ENCODE measurements at regions of chr12 and their contacts with region 1.

Region 1: GRCh38 chr12:123232807-123233543 is at the starts of genes MPHOSPH9 and MTRFR:
- DNase-seq: peak; percentile 99
- ATAC-seq: peak; percentile 93 to 98 (median 96)
- H3K4me3 ChIP-seq: peak within 1 kb of the TSS; percentile 87 to 92 (median 89)
- H3K27ac ChIP-seq: peak within 1 kb of the TSS; percentile 80 to 88 (median 87)
- H3K4me1 ChIP-seq: peaks cover 0 to 36% (median 8%) of the 10 kb centered on the region in 4 donors
- H3K27me3 ChIP-seq: no peaks in the 10 kb centered on the region
- CTCF ChIP-seq: no peak
- POLR2A ChIP-seq: peak; percentile 99
- total RNA-seq, gene MPHOSPH9: 14.5 to 25.7 (median 19.1) TPM
- total RNA-seq, gene MTRFR: 6.5 to 8.6 (median 7.4) TPM

Region 2: DNA sequence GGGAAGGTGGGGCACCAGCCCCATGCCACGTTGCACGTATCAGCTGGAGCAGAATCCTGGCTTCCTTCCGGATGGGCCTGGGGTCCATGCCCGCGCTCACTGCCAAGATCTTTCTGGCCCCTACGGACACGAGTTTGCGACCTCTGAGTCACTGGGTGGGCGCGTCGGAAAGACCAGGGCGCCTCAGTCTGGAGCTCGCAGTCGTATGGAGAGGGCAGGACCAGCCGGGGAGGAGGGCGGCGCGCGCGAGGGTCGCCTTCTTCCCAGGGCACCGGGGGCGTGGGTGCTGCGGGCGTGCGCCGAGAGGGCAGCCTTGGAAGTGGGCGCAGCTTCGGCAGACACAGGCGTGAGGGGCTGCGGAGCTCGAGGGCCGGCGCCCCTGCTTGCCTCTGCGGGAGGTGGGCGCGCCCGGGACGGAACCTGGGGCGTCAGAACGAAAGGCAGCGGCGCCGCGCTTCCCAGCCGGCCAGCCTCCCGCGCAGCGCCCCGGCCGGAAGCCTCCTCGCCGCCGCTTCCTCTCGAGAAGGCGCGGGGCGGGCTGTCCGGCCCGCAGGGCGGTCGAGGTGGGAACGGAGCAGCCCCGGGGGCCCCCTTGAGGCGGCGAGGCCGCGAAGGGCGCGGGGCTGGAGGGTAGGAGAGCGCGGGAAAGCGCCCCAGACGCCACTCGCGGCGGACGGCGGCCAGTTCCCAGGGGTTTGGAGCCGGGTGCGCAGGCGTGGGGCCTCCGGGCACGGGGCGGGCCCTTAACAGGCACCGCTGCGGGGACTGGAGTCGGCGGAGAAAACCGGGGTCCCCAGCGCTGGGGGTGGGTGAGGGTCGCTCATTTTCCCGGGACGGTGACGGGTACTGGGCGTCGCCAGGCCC is 252.6 kb before region 1 on chr12 and contains the start of gene ARL6IP4:
- intact Hi-C with region 1: loop called in 1 of 2 experiments (anchors 10 kb)
- DNase-seq: peak in 2 of 3 donors; percentile 74 to 77
- ATAC-seq: peak; percentile 55 to 83 (median 69)
- H3K4me3 ChIP-seq: peak within 1 kb of the TSS; percentile 97 to 99 (median 98)
- H3K27ac ChIP-seq: peak within 1 kb of the TSS; percentile 54 to 90 (median 84)
- H3K4me1 ChIP-seq: peaks cover 0 to 61% (median 27%) of the 10 kb centered on the region in 4 donors
- H3K27me3 ChIP-seq: no peaks in the 10 kb centered on the region
- CTCF ChIP-seq: peak in 1 of 4 donors; percentile 9
- POLR2A ChIP-seq: peak; percentile 66
- total RNA-seq, gene ARL6IP4: 84.7 to 146 (median 110) TPM

Region 3: GRCh38 chr12:123150744-123151456 is 82.1 kb before region 1 on chr12 and contains the start of gene PITPNM2:
- intact Hi-C with region 1: loop called in 1 of 2 experiments (anchors 5 kb)
- DNase-seq: peak; percentile 65 to 71 (median 71)
- ATAC-seq: peak; percentile 66 to 85 (median 76)
- H3K4me3 ChIP-seq: peak within 1 kb of the TSS; percentile 75 to 85 (median 79)
- H3K27ac ChIP-seq: peak within 1 kb of the TSS; percentile 62 to 80 (median 66)
- H3K4me1 ChIP-seq: peaks cover 0 to 44% (median 21%) of the 10 kb centered on the region in 4 donors
- H3K27me3 ChIP-seq: no peaks in the 10 kb centered on the region
- CTCF ChIP-seq: peak in 2 of 4 donors; percentile 37 to 54
- POLR2A ChIP-seq: peak; percentile 16
- total RNA-seq, gene PITPNM2: 5.8 to 24.7 (median 14.2) TPM

Measured in right lobe of liver (tissue), 6 donors.